ENCODE measurements at regions of chr16 and their contacts with region 1.

Region 1: DNA sequence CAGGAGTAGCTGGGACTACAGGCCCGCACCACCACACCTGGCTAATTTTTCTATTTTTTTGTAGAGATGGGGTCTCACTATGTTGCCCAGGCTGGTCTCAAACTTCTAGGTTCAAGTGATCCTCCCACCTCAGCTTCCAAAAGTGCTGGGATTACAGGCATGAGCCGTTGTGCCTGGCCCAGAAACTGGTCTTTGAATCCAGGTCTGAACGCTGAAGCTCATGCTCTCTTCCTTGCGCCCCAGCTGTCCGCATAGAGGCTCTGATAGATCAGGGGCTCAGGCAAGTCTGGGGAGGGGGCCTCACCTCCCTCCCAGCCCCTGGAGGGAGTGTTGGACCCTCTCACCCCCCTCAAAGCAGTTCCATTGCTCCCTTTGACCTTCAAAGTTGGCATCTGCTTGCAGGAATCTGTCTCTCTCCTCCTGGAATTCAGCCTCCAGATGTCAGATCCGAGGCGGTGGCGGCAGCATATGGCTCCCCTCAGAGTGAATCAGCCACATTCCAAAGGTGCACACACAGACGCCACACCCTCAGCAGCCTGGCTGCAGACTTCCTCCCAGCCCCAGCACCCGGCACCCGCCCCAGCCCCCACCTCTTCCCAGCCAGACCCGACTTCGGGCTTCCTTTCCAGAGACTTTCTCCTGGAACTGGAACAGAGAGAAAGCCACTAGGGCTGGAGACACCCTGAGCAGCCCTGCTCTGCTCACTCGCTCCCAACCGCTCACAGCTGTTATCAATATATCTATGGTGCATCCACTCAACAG is 16.9 kb upstream of the GLIS2 start:
- DNase-seq: no peak

Region 2: DNA sequence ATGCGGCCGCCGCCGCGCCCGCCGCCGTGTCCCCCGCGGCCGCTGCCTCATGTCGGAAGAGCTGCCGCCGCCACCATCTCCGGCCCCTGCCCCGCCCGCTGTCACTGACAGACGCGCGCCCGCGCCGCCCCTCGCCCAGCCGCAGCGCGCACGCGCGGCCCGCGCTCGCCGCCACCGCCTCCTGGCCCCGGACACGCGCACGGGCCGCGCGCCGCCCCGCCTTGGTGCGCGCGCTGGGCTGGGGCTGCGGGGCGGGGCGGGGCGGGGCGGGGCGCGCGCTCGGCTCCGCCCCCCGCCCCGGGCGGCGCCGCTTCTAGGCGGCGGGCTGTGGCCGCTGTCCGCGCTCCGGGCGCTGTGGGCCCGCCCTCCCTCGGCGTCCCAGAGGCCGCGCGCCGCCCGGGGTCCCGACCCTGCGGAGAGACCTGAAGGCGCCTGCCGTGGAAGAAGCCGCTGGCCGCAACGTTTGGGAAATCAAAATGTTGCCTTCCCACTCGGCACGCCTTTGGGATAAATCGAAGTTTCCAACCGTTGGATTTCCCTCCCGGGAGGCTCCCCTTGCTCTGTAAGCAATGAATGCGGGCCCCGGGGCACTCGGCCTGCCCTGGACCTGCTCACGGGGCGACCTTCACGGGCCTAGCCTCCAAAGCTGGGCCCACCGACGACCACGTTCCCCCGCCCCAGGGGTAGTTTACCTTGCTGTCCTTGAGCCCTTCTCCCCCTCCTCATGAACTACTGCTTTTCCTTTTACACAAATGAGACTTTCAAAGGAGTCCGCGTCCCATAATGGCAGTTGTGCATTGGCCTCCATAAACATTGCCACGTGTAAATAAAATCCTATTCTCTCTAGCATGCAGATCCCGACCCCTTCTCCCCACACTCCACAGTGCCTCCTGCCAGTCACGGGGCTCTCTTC is 182.3 kb before region 1 on chr16 and contains the start of gene ADCY9:
- CTCF ChIA-PET with region 1: no interaction called
- POLR2A ChIA-PET with region 1: no interaction called
- DNase-seq: peak; percentile 96

Region 3: DNA sequence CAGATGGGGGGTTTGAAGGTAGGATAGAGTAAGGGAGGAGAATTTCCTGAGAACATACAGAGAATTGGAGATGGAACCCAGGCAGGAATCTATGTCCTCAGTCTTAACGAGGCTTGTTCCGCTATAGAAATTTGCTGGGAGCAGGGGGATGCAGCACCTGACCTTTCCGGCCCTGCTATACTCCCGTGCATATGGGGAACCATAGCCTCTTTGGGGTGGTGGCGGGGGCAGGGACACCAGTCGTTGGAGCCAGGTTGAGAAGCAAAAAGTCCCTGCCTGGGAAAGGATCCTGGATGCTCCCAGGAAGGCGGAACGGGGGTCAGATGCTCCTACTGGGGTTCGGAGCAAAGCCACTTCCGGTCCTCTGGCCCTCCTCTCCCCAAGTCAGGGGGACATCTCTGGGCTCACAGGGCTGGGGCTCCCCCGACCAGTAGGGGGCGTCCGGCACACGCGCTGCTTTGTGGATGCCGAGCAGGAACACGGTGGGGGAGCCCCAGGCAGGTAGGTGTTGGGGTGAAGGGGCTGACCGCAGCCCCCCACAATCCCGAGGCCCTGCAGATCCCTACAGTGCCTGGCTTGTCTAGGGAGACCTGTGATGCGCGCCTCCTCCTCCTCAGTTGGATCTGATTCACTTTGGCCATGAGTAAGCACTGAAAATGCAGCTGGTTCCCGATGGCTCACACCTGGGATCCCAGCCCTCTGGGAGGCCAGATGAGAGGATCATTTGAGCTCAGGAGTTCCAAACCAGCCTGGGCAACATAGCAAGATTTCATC is 10.6 kb before region 1 on chr16:
- CTCF ChIA-PET with region 1: interaction called, 21 read pairs
- POLR2A ChIA-PET with region 1: no interaction called
- DNase-seq: peak; percentile 77